MCF 10A (cell line): ENCODE measurements at regions of chr9 and their contacts with region 1.

Region 1: GRCh38 chr9:130539473-130540223 is 39.7 kb upstream of the FUBP3 start:
- DNase-seq: peak; percentile 94
- H3K4me3 Mint-ChIP-seq: peak overlapping the region; percentile 25
- H3K27ac Mint-ChIP-seq: peak overlapping the region; percentile 35
- H3K4me1 Mint-ChIP-seq: peaks cover 37% of the 10 kb centered on the region
- H3K27me3 Mint-ChIP-seq: no peaks in the 10 kb centered on the region
- CTCF ChIP-seq: no peak

Region 2: GRCh38 chr9:130518943-130519799 is 20.5 kb before region 1 on chr9:
- CTCF ChIA-PET with region 1: no interaction called
- POLR2A ChIA-PET with region 1: no interaction called
- intact Hi-C with region 1: no loop called
- DNase-seq: no peak
- H3K4me3 Mint-ChIP-seq: no peak overlapping the region
- H3K27ac Mint-ChIP-seq: no peak overlapping the region
- H3K4me1 Mint-ChIP-seq: no peaks in the 10 kb centered on the region
- H3K27me3 Mint-ChIP-seq: no peaks in the 10 kb centered on the region
- CTCF ChIP-seq: no peak

Region 3: DNA sequence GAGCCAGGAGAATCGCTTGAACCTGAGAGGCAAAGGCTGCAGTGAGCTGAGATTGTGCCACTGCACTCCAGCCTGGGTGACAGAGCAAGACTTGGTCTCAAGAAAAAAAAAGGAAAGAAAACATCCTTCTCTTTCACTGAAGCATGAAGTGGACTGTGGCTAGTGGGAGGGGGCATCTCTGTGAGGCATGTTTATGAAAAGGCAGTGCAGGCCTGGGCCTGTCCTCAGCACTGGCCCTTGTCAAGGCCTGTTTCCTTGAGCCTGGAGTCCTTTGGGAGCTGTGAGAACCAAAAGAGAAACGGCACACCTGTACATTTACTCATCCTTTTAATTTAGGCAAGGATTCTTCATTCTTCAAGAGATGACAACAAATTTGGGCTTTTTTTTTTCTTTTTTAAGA is 21.4 kb after region 1 on chr9:
- CTCF ChIA-PET with region 1: interaction called, 6 read pairs
- POLR2A ChIA-PET with region 1: interaction called, 12 read pairs
- intact Hi-C with region 1: no loop called
- DNase-seq: peak; percentile 82
- H3K4me3 Mint-ChIP-seq: no peak overlapping the region
- H3K27ac Mint-ChIP-seq: peak overlapping the region; percentile 31
- H3K4me1 Mint-ChIP-seq: peaks cover 16% of the 10 kb centered on the region
- H3K27me3 Mint-ChIP-seq: no peaks in the 10 kb centered on the region
- CTCF ChIP-seq: no peak